HEK293 (cell line): ENCODE measurements at regions of chrX and their contacts with region 1.

Region 1: GRCh38 chrX:101415180-101416145 is 7.4 kb downstream of the HNRNPH2 start:
- H3K4me3 ChIP-seq: no peak overlapping the region
- H3K27ac ChIP-seq: no peak overlapping the region
- H3K4me1 ChIP-seq: 0 out of 2 replicates have a peak, but pooled peaks cover 2% of the 10 kb centered on the region
- CTCF ChIP-seq: peak; percentile 58; the same call in 1 of the 2 replicates

Region 2: GRCh38 chrX:101303790-101304189 is 111.7 kb before region 1 on chrX:
- CTCF ChIA-PET with region 1: no interaction called
- POLR2A ChIA-PET with region 1: no interaction called
- H3K4me3 ChIP-seq: no peak overlapping the region
- H3K27ac ChIP-seq: no peak overlapping the region
- H3K4me1 ChIP-seq: no peaks in the 10 kb centered on the region
- CTCF ChIP-seq: no peak

Region 3: DNA sequence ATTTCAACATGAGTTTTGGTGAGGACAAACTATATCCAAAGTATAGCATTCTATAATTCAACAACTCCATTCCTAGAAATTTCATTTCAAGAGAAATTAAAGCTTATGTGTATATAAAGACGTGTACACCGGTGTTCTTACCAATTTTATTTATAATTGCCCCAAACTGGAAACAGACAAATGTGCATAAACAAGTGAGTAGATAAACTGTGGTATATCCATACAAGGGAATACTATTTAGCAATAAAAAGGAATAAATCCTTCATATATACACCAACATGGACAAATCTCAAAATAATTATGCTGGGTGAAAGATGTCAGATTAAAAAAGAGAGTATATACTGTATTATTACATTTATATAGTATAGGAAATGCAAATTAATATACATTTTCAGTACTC is 12.5 kb after region 1 on chrX:
- CTCF ChIA-PET with region 1: interaction called, 28 read pairs
- POLR2A ChIA-PET with region 1: interaction called, 4 read pairs
- H3K4me3 ChIP-seq: no peak overlapping the region
- H3K27ac ChIP-seq: no peak overlapping the region
- H3K4me1 ChIP-seq: no peaks in the 10 kb centered on the region
- CTCF ChIP-seq: no peak

Region 4: GRCh38 chrX:101460669-101461068 is 45.2 kb after region 1 on chrX:
- CTCF ChIA-PET with region 1: interaction called, 10 read pairs
- POLR2A ChIA-PET with region 1: no interaction called
- H3K4me3 ChIP-seq: no peak overlapping the region
- H3K27ac ChIP-seq: no peak overlapping the region
- H3K4me1 ChIP-seq: no peaks in the 10 kb centered on the region
- CTCF ChIP-seq: no peak